ENCODE measurements at regions of chr12 and their contacts with region 1.

Region 1: GRCh38 chr12:94481734-94482133 is 22.1 kb upstream of the CEP83 start:
- DNase-seq: no peak
- H3K4me3 ChIP-seq: no peak overlapping the region
- H3K27ac ChIP-seq: no peak overlapping the region
- H3K4me1 ChIP-seq: no peaks in the 10 kb centered on the region
- H3K27me3 ChIP-seq: no peaks in the 10 kb centered on the region
- CTCF ChIP-seq: no peak

Region 2: GRCh38 chr12:94586589-94587259 is 105.0 kb after region 1 on chr12:
- CTCF ChIA-PET with region 1: interaction called, 12 read pairs
- dilution Hi-C with region 1: no loop called
- in situ Hi-C with region 1: no loop called
- intact Hi-C with region 1: no loop called
- DNase-seq: no peak
- H3K4me3 ChIP-seq: no peak overlapping the region
- H3K27ac ChIP-seq: no peak overlapping the region
- H3K4me1 ChIP-seq: peaks cover 27% of the 10 kb centered on the region
- H3K27me3 ChIP-seq: no peaks in the 10 kb centered on the region
- CTCF ChIP-seq: no peak

Region 3: DNA sequence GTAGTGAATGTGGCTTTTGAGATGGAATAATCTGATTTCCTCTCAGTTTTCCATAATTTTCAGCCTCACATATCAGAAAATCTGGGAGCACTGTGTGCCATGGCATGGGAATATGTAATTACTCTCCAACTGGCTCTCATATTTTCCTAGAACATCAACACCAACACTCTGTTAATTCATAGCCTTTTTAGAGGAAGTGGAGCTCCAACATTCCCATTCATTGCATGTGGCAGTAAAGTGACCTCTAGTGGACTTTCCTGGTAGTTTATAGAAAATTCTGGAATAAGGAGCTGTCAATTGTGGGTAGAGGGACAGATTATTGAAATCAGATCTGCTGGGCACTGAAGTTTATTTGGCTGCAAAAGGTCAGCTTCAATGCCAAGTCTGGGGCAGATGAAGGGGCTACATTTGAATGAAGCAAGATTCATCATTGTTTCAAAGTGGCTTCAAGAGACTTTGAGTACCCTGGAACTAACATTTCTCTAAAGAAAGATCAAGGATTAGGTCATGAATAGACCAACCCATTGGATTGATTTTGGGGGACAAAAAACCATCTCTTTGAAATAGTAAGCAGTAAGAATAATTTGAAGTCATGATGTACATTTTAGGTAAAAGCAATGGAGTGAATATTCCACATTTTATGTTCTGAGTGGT is 1093.2 kb after region 1 on chr12:
- CTCF ChIA-PET with region 1: no interaction called
- dilution Hi-C with region 1: no loop called
- in situ Hi-C with region 1: no loop called
- intact Hi-C with region 1: no loop called
- DNase-seq: peak; percentile 34
- H3K4me3 ChIP-seq: no peak overlapping the region
- H3K27ac ChIP-seq: no peak overlapping the region
- H3K4me1 ChIP-seq: no peaks in the 10 kb centered on the region
- H3K27me3 ChIP-seq: no peaks in the 10 kb centered on the region
- CTCF ChIP-seq: peak; percentile 64 to 77